ENCODE measurements at regions of chr19 and their contacts with region 1.

Region 1: GRCh38 chr19:54576411-54576976 is 2.9 kb downstream of the LILRA2 start:
- DNase-seq: no peak
- ATAC-seq: peak in 1 of 4 donors; percentile 9
- H3K4me3 ChIP-seq: no peak overlapping the region
- H3K27ac ChIP-seq: no peak overlapping the region
- H3K4me1 ChIP-seq: peaks cover 0 to 12% (median 0%) of the 10 kb centered on the region in 12 donors
- H3K27me3 ChIP-seq: peaks cover 0 to 13% (median 0%) of the 10 kb centered on the region in 9 donors
- CTCF ChIP-seq: no peak
- POLR2A ChIP-seq: no peak

Region 2: GRCh38 chr19:54297760-54298305 is 278.7 kb before region 1 on chr19:
- intact Hi-C with region 1: loop called in 2 of 10 experiments (anchors 2 to 5 kb)
- DNase-seq: no peak
- ATAC-seq: no peak
- H3K4me3 ChIP-seq: no peak overlapping the region
- H3K27ac ChIP-seq: no peak overlapping the region
- H3K4me1 ChIP-seq: peaks cover 0 to 20% (median 0%) of the 10 kb centered on the region in 12 donors
- H3K27me3 ChIP-seq: peaks cover 0 to 26% (median 0%) of the 10 kb centered on the region in 9 donors
- CTCF ChIP-seq: no peak
- POLR2A ChIP-seq: no peak

Region 3: GRCh38 chr19:54345938-54346386 is 230.5 kb before region 1 on chr19:
- intact Hi-C with region 1: no loop called
- DNase-seq: no peak
- ATAC-seq: peak in 2 of 4 donors; percentile 31 to 34
- H3K4me3 ChIP-seq: no peak overlapping the region
- H3K27ac ChIP-seq: peak overlapping the region in 1 of 12 donors; percentile 66
- H3K4me1 ChIP-seq: peaks cover 0 to 26% (median 0%) of the 10 kb centered on the region in 12 donors
- H3K27me3 ChIP-seq: peaks cover 0 to 21% (median 0%) of the 10 kb centered on the region in 9 donors
- CTCF ChIP-seq: no peak
- POLR2A ChIP-seq: no peak

Measured in heart left ventricle (tissue), 16 donors.